OCI-LY7 (cell line): ENCODE measurements at regions of chr10 and their contacts with region 1.

Region 1: GRCh38 chr10:90912174-90912573 is 8.7 kb downstream of the ANKRD1 start:
- DNase-seq: no peak
- H3K4me3 ChIP-seq: no peak overlapping the region
- H3K27ac ChIP-seq: no peak overlapping the region
- H3K4me1 ChIP-seq: no peaks in the 10 kb centered on the region
- CTCF ChIP-seq: no peak

Region 2: DNA sequence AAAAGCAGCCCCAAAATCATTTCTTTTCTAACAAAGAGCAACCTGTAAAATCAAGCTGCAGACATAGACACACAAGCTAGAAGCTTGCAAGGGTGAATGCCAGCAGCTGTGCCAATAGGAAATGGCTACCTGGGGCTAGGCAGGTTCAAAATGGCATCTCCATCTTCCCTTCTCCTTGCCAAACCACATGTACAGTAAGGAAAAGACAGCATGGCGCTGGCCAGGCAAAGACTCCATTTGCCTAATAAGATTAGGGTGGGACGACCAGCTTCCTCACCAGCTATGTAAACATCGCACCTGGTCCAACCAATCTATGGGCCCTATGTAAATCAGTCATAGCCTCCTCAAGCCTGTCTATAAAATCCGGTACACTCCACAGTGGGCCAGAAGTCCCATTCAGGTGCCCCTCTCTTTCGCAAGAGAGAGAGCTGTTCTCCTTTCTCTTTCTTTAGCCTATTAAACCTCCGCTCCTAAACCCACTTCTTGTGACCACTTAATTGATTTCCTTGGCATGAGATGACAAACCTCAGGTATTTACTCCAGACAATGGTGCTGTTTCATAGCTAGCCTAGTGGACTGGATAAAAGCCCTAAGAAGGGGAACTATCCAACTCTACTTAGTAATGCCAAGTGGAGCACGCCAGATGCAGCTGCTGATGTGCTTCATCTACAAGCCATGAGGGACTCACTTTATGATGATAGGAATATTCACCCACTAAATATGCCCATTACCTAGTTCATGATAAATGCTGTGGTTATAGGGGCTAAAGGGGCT is 98.4 kb before region 1 on chr10:
- CTCF ChIA-PET with region 1: no interaction called
- POLR2A ChIA-PET with region 1: no interaction called
- intact Hi-C with region 1: no loop called
- DNase-seq: no peak
- H3K4me3 ChIP-seq: no peak overlapping the region
- H3K27ac ChIP-seq: no peak overlapping the region
- H3K4me1 ChIP-seq: no peaks in the 10 kb centered on the region
- CTCF ChIP-seq: no peak

Region 3: GRCh38 chr10:90879062-90879461 is 33.1 kb before region 1 on chr10:
- CTCF ChIA-PET with region 1: no interaction called
- POLR2A ChIA-PET with region 1: no interaction called
- intact Hi-C with region 1: no loop called
- DNase-seq: no peak
- H3K4me3 ChIP-seq: no peak overlapping the region
- H3K27ac ChIP-seq: no peak overlapping the region
- H3K4me1 ChIP-seq: peaks cover 6% of the 10 kb centered on the region
- CTCF ChIP-seq: no peak

Region 4: GRCh38 chr10:90927293-90927692 is 15.1 kb after region 1 on chr10:
- CTCF ChIA-PET with region 1: no interaction called
- POLR2A ChIA-PET with region 1: no interaction called
- intact Hi-C with region 1: no loop called
- DNase-seq: no peak
- H3K4me3 ChIP-seq: no peak overlapping the region
- H3K27ac ChIP-seq: no peak overlapping the region
- H3K4me1 ChIP-seq: no peaks in the 10 kb centered on the region
- CTCF ChIP-seq: no peak

Region 5: DNA sequence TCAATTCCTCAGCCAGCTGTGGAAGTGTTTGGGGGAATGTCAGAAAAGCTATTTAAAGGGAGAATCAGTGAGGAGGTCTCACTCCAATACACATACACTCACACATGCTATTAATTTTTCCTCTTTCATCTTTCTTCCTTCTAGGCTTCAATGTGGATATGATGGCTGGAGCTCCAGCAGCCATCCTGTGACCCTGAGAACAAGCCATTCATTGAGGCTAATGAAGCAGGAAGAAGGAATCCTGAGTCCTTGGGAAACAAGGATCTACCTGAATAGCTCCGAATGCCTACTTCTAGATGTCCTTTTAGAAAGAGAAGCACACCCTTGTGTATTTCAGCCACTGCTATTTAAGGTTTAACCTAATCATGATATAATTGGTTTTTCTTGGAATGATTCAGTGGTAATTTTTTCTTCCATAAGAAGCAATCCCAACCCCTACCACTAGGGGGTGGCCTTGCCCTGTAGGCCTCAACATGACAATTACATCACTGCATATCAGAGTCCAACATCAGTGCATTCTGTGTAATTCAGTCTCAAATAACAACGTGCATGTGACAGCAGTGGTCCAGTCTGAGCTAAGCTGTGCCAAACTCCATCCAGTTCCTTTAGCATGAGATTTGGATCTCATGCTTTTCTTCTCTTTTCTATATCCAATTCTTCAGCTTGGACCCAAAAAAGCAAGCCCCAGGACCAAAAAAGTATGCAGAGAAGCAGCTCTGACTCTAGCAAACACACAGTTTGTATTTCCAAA is 94.0 kb after region 1 on chr10:
- CTCF ChIA-PET with region 1: no interaction called
- POLR2A ChIA-PET with region 1: interaction called, 3 read pairs
- intact Hi-C with region 1: loop called (anchors 2 kb)
- DNase-seq: peak; percentile 65
- H3K4me3 ChIP-seq: no peak overlapping the region
- H3K27ac ChIP-seq: no peak overlapping the region
- H3K4me1 ChIP-seq: no peaks in the 10 kb centered on the region
- CTCF ChIP-seq: peak; percentile 93